Caco-2 (cell line): ENCODE measurements at regions of chr2 and their contacts with region 1.

Region 1: GRCh38 chr2:88187038-88187676 is 17.0 kb downstream of the THNSL2 start:
- DNase-seq: peak; percentile 82 to 83
- H3K4me3 ChIP-seq: no peak overlapping the region
- H3K4me3 Mint-ChIP-seq: no peak overlapping the region
- H3K27ac Mint-ChIP-seq: no peak overlapping the region
- H3K4me1 ChIP-seq: no peaks in the 10 kb centered on the region
- H3K4me1 Mint-ChIP-seq: no peaks in the 10 kb centered on the region
- H3K27me3 ChIP-seq: no peaks in the 10 kb centered on the region
- H3K27me3 Mint-ChIP-seq: no peaks in the 10 kb centered on the region
- CTCF ChIP-seq: peak; percentile 75 to 92

Region 2: DNA sequence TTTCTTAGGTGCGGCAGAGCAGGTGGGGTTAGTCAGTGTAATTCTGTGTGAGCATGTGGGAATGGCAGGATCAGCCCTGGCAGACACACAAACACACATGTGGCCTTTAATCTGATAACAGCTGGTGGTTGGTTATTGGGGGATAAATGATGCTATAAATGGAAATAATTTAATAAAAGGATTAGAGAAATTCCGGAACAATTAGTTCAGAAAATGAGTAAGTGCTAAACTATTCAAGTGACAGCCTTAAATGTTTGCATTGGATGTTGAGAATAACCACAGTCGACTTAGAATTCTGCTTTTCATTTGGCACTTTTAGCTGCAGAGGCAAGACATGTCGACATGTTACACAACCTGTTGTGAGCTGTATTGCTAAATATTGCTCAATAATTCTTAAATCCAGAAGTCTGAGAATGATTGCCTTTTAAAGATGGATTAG is 112.3 kb before region 1 on chr2:
- CTCF ChIA-PET with region 1: no interaction called
- POLR2A ChIA-PET with region 1: no interaction called
- intact Hi-C with region 1: no loop called
- DNase-seq: no peak
- H3K4me3 ChIP-seq: no peak overlapping the region
- H3K4me3 Mint-ChIP-seq: no peak overlapping the region
- H3K27ac Mint-ChIP-seq: no peak overlapping the region
- H3K4me1 ChIP-seq: 0 out of 2 replicates have a peak, but pooled peaks cover 3% of the 10 kb centered on the region
- H3K4me1 Mint-ChIP-seq: no peaks in the 10 kb centered on the region
- H3K27me3 ChIP-seq: no peaks in the 10 kb centered on the region
- H3K27me3 Mint-ChIP-seq: no peaks in the 10 kb centered on the region
- CTCF ChIP-seq: no peak

Region 3: GRCh38 chr2:88159955-88160415 is 27.2 kb before region 1 on chr2:
- CTCF ChIA-PET with region 1: no interaction called
- POLR2A ChIA-PET with region 1: no interaction called
- intact Hi-C with region 1: loop called (anchors 1 kb)
- DNase-seq: peak; percentile 73 to 76
- H3K4me3 ChIP-seq: no peak overlapping the region
- H3K4me3 Mint-ChIP-seq: no peak overlapping the region
- H3K27ac Mint-ChIP-seq: no peak overlapping the region
- H3K4me1 ChIP-seq: no peaks in the 10 kb centered on the region
- H3K4me1 Mint-ChIP-seq: no peaks in the 10 kb centered on the region
- H3K27me3 ChIP-seq: no peaks in the 10 kb centered on the region
- H3K27me3 Mint-ChIP-seq: no peaks in the 10 kb centered on the region
- CTCF ChIP-seq: peak; percentile 87 to 89

Region 4: GRCh38 chr2:88216332-88217040 is 29.3 kb after region 1 on chr2:
- CTCF ChIA-PET with region 1: no interaction called
- POLR2A ChIA-PET with region 1: no interaction called
- intact Hi-C with region 1: no loop called
- DNase-seq: no peak
- H3K4me3 ChIP-seq: no peak overlapping the region
- H3K4me3 Mint-ChIP-seq: no peak overlapping the region
- H3K27ac Mint-ChIP-seq: no peak overlapping the region
- H3K4me1 ChIP-seq: no peaks in the 10 kb centered on the region
- H3K4me1 Mint-ChIP-seq: no peaks in the 10 kb centered on the region
- H3K27me3 ChIP-seq: no peaks in the 10 kb centered on the region
- H3K27me3 Mint-ChIP-seq: peaks cover 12% of the 10 kb centered on the region
- CTCF ChIP-seq: no peak

Region 5: GRCh38 chr2:88398180-88398579 is 211.0 kb after region 1 on chr2:
- CTCF ChIA-PET with region 1: no interaction called
- POLR2A ChIA-PET with region 1: no interaction called
- intact Hi-C with region 1: loop called (anchors 5 kb)
- DNase-seq: no peak
- H3K4me3 ChIP-seq: no peak overlapping the region
- H3K4me3 Mint-ChIP-seq: no peak overlapping the region
- H3K27ac Mint-ChIP-seq: no peak overlapping the region
- H3K4me1 ChIP-seq: no peaks in the 10 kb centered on the region
- H3K4me1 Mint-ChIP-seq: no peaks in the 10 kb centered on the region
- H3K27me3 ChIP-seq: no peaks in the 10 kb centered on the region
- H3K27me3 Mint-ChIP-seq: peaks cover 7% of the 10 kb centered on the region
- CTCF ChIP-seq: no peak

Region 6: DNA sequence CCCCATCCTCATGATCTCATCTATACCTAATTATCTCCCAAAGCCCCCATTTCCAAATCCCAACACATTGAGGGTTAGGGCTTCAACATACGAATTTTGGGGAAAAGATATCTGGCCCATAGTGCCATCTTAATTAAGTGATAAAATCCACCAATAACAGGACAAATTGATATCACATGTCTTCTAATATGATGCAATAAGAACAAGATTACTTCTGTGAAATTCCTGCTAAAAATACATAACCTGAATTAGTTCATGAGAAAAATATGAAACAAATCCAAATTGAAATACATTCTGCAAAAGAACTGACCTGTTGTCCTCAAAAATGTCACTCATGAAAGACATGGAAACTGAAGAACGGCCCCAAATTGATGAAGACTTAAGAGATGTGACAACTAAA is 236.6 kb after region 1 on chr2:
- CTCF ChIA-PET with region 1: no interaction called
- POLR2A ChIA-PET with region 1: no interaction called
- intact Hi-C with region 1: no loop called
- DNase-seq: no peak
- H3K4me3 ChIP-seq: no peak overlapping the region
- H3K4me3 Mint-ChIP-seq: no peak overlapping the region
- H3K27ac Mint-ChIP-seq: no peak overlapping the region
- H3K4me1 ChIP-seq: no peaks in the 10 kb centered on the region
- H3K4me1 Mint-ChIP-seq: no peaks in the 10 kb centered on the region
- H3K27me3 ChIP-seq: no peaks in the 10 kb centered on the region
- H3K27me3 Mint-ChIP-seq: peaks cover 14% of the 10 kb centered on the region
- CTCF ChIP-seq: no peak

Region 7: DNA sequence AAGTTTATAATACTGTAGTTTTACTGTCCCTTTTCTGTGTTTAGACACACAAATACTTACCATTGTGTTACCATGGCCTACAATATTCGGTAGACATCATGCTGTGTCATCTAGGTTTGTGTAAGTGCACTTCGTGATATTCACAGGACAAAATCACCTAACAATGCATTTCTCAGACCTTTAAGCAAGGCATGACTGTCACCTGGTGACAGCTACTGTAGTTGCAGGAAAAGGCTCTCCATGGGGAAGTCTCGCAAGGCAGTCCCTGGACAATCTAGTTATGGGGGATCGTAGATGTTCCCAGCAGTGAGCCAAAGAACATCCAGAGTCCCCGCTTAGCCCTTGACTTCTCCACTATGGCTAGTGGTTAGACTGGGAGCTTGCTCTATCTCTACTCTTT is 367.0 kb after region 1 on chr2:
- CTCF ChIA-PET with region 1: no interaction called
- POLR2A ChIA-PET with region 1: no interaction called
- intact Hi-C with region 1: loop called (anchors 1 kb)
- DNase-seq: peak in 1 of 2 experiments; percentile 20
- H3K4me3 ChIP-seq: no peak overlapping the region
- H3K4me3 Mint-ChIP-seq: no peak overlapping the region
- H3K27ac Mint-ChIP-seq: no peak overlapping the region
- H3K4me1 ChIP-seq: no peaks in the 10 kb centered on the region
- H3K4me1 Mint-ChIP-seq: no peaks in the 10 kb centered on the region
- H3K27me3 ChIP-seq: no peaks in the 10 kb centered on the region
- H3K27me3 Mint-ChIP-seq: no peaks in the 10 kb centered on the region
- CTCF ChIP-seq: peak; percentile 29 to 59